ENCODE measurements at regions of chr2 and their contacts with region 1.

Region 1: GRCh38 chr2:212892193-212892592 is 259.2 kb downstream of the IKZF2 start:
- DNase-seq: peak; percentile 55
- ATAC-seq: peak; percentile 87
- H3K4me3 ChIP-seq: no peak overlapping the region
- H3K27ac ChIP-seq: no peak overlapping the region
- H3K4me1 ChIP-seq: no peaks in the 10 kb centered on the region
- H3K27me3 ChIP-seq: no peaks in the 10 kb centered on the region
- CTCF ChIP-seq: peak; percentile 44 to 56 (median 54); a peak in 5 of 6 replicates
- POLR2A ChIP-seq: no peak
- RAD21 ChIP-seq: peak; percentile 57

Region 2: DNA sequence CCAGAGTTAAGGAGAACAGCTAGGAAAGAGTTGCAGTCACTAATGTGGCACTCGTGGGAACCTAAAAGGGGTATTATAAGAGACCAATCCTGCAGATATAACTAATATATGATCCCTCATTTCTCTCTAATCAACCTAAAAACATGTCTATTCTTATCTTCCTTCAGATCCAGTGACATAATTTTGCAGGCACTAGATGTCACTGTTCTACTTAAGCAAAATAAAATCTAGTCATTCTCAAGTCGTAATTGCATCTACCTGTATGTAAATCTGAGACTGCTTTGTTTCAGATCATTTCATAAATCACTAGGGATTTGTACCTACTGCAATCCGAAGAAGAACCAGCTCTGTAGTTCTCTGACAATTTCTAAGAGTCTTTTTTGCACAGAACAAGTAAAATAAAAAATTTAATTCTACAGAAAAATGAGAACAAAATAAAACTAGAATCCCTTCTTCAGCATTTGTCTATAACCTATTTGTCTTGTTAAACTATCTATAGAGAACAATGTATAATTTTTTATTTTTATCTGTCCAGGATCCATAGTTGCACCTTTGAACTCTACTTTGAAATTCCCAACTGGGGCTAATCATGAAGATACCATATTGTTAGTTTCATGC is 297.0 kb before region 1 on chr2:
- CTCF ChIA-PET with region 1: no interaction called
- POLR2A ChIA-PET with region 1: no interaction called
- RAD21 ChIA-PET with region 1: interaction called in 1 of 2 experiments, 4 read pairs
- intact Hi-C with region 1: loop called (anchors 10 kb)
- DNase-seq: peak; percentile 32
- ATAC-seq: peak; percentile 78
- H3K4me3 ChIP-seq: no peak overlapping the region
- H3K27ac ChIP-seq: no peak overlapping the region
- H3K4me1 ChIP-seq: no peaks in the 10 kb centered on the region
- H3K27me3 ChIP-seq: no peaks in the 10 kb centered on the region
- CTCF ChIP-seq: peak; percentile 27 to 58 (median 36); a peak in 4 of 6 replicates
- POLR2A ChIP-seq: no peak
- RAD21 ChIP-seq: peak; percentile 64

Region 3: DNA sequence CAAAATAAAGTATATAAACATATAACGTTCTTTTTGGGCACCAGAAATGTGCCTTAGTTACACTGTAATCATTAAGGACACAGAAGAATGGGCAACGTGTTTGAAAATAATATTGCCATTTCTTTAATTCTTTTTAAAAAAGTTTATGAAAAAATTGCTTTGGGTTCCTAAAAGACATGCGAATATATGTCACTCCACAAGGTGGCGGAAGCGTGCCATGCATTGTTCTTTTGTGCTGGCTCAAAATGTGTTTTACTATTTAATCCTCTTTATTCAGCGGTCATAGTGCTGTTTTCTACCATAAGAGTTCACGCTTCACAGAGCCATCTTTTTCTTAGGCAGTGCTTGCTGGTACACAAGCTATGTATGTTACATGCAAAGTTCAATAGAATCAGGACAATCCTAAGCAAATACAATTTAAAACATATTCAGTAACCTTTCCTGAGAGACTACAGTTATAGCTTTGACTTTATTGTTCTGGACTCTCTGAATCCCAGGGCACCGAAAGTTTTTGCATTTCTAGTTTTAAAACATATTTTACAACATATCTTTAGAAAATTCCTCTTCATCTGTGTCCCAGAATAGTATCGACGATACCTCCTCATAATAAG is 205.8 kb before region 1 on chr2:
- CTCF ChIA-PET with region 1: interaction called, 5 read pairs
- POLR2A ChIA-PET with region 1: no interaction called
- RAD21 ChIA-PET with region 1: no interaction called
- intact Hi-C with region 1: loop called (anchors 1 kb)
- DNase-seq: peak; percentile 44
- ATAC-seq: peak; percentile 61
- H3K4me3 ChIP-seq: no peak overlapping the region
- H3K27ac ChIP-seq: no peak overlapping the region
- H3K4me1 ChIP-seq: no peaks in the 10 kb centered on the region
- H3K27me3 ChIP-seq: no peaks in the 10 kb centered on the region
- CTCF ChIP-seq: peak; percentile 72 to 84 (median 79)
- POLR2A ChIP-seq: no peak
- RAD21 ChIP-seq: peak; percentile 90

Region 4: DNA sequence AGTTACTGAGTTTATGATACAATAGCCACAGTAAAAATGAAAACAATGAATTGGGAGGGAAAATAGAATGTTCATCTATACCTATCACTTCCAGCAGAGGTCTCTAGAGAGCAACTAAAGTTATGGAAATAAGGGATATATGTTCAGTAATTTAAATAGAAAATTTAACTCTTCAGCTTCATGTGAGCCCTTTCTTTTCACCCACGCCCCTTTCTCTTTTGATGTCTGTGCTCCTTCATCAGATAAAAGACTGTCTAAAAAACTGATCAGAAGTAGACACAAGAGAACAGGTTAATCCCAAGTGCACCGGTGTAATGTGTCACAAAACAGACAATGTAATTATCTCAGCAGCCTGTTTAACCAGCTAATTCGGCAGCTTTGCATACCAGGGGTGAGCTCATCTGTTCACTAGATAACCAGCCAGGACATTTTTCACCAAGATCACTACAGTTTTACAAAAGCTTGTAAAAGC is 115.1 kb before region 1 on chr2:
- CTCF ChIA-PET with region 1: interaction called, 12 read pairs
- POLR2A ChIA-PET with region 1: no interaction called
- RAD21 ChIA-PET with region 1: no interaction called
- intact Hi-C with region 1: no loop called
- DNase-seq: peak; percentile 6
- ATAC-seq: peak; percentile 63
- H3K4me3 ChIP-seq: no peak overlapping the region
- H3K27ac ChIP-seq: no peak overlapping the region
- H3K4me1 ChIP-seq: no peaks in the 10 kb centered on the region
- H3K27me3 ChIP-seq: no peaks in the 10 kb centered on the region
- CTCF ChIP-seq: peak; percentile 38 to 59 (median 40); a peak in 5 of 6 replicates
- POLR2A ChIP-seq: no peak
- RAD21 ChIP-seq: peak; percentile 58

Region 5: GRCh38 chr2:213266421-213266820 is 374.2 kb after region 1 on chr2:
- CTCF ChIA-PET with region 1: no interaction called
- POLR2A ChIA-PET with region 1: no interaction called
- RAD21 ChIA-PET with region 1: no interaction called
- intact Hi-C with region 1: no loop called
- DNase-seq: no peak
- ATAC-seq: no peak
- H3K4me3 ChIP-seq: no peak overlapping the region
- H3K27ac ChIP-seq: no peak overlapping the region
- H3K4me1 ChIP-seq: no peaks in the 10 kb centered on the region
- H3K27me3 ChIP-seq: no peaks in the 10 kb centered on the region
- CTCF ChIP-seq: no peak
- POLR2A ChIP-seq: no peak
- RAD21 ChIP-seq: no peak

Measured in HCT116 (cell line).